ENCODE measurements at regions of chr1 and their contacts with region 1.

Region 1: GRCh38 chr1:156608036-156608674 is 6.9 kb upstream of the GPATCH4 start:
- DNase-seq: peak; percentile 62
- ATAC-seq: peak; percentile 99
- H3K4me3 ChIP-seq: no peak overlapping the region
- H3K27ac ChIP-seq: no peak overlapping the region
- H3K4me1 ChIP-seq: 0 out of 2 replicates have a peak, but pooled peaks cover 4% of the 10 kb centered on the region
- H3K27me3 ChIP-seq: peaks cover 0 to 3% of the 10 kb centered on the region in 2 experiments; a peak in 2 of 4 replicates
- CTCF ChIP-seq: peak; percentile 75 to 93 (median 78)
- EP300 ChIP-seq: no peak
- POLR2A ChIP-seq: no peak
- RAD21 ChIP-seq: peak; percentile 80

Region 2: DNA sequence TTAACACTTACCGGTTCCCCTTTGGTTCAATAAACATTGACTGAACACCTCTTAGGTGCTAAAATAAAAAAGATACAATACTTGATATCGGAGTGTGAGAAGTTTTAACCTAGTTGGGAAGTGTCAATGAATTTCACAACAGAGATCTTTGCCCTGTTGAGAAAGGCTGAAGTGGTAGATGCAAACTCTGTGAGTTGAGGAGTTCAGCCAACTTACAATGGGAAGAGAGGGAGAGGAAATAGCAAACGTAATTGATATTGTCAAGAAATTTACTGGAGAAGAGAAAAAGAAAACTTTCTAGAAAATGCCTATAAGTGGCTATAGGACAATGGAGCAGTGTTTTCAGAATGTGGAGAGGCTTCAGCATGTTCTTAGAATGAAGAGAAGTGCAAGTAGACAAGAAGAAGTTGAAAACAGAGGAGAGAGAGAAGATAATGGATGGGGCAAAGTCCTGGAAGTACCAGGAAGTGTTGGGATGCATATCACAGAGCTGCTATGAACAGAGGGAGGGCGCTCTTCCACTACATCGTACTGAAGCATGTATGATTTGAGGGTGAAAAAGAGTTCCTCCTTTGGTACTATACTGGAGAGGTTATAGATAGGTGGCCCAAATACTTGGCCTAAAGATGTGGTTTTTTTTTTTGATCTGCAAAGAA is 156.5 kb before region 1 on chr1:
- CTCF ChIA-PET with region 1: interaction called, 25 read pairs
- POLR2A ChIA-PET with region 1: interaction called, 4 read pairs
- RAD21 ChIA-PET with region 1: interaction called, 5 read pairs
- SMC1A ChIA-PET with region 1: interaction called, 13 read pairs
- in situ Hi-C with region 1: loop called (anchors 10 kb)
- intact Hi-C with region 1: loop called (anchors 2 kb)
- DNase-seq: no peak
- ATAC-seq: no peak
- H3K4me3 ChIP-seq: no peak overlapping the region
- H3K27ac ChIP-seq: no peak overlapping the region
- H3K4me1 ChIP-seq: peaks cover 6% of the 10 kb centered on the region
- H3K27me3 ChIP-seq: peaks cover 0 to 3% of the 10 kb centered on the region in 2 experiments; a peak in 2 of 4 replicates
- CTCF ChIP-seq: no peak; a peak in 1 of 6 replicates
- EP300 ChIP-seq: no peak
- POLR2A ChIP-seq: no peak
- RAD21 ChIP-seq: no peak

Region 3: DNA sequence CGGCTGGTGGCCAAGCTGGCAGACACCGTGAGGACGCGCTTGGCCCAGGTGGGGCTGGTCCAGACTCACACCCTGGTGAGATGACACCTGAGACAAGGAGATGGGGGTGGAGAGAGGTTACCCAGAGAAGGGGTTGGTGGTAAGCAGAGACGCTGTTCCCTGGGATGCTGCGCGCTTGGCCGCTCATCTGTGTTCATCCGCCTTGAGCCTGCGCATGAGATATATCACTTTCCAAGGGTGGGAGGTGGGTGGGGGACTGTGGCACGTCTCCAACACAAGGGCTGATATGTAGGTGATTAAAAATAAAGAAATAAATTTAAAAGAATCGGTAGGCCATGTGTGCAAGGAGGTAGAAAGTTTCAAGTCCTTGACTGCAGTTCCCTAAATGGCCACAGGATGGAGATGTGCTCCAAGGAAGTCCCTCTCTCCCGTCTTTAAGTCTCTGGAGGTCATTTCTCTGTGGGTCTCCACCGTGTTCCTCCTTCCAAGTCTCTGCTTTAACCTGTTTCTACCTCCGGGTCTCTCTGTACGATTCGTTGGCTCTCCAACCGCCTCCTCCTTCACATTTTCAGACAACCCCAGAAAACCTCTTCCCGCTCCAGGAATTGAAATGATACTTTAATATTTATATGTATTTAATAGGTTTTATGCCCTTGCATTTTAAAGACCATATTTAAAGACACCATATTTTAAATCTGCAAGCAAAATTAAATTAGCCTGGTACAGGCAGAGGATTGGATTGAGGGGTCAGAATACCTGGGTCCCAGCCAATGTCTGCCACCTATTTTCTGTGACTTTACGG is 24.1 kb before region 1 on chr1:
- CTCF ChIA-PET with region 1: interaction called, 40 read pairs
- POLR2A ChIA-PET with region 1: no interaction called
- RAD21 ChIA-PET with region 1: interaction called, 12 read pairs
- SMC1A ChIA-PET with region 1: interaction called, 22 read pairs
- in situ Hi-C with region 1: no loop called
- intact Hi-C with region 1: loop called (anchors 1 kb)
- DNase-seq: no peak
- ATAC-seq: peak; percentile 83
- H3K4me3 ChIP-seq: no peak overlapping the region
- H3K27ac ChIP-seq: no peak overlapping the region
- H3K4me1 ChIP-seq: peaks cover 16% of the 10 kb centered on the region
- H3K27me3 ChIP-seq: no peaks in the 10 kb centered on the region; a peak in 1 of 4 replicates
- CTCF ChIP-seq: peak; percentile 88 to 93 (median 89)
- EP300 ChIP-seq: no peak
- POLR2A ChIP-seq: no peak
- RAD21 ChIP-seq: peak; percentile 87

Region 4: GRCh38 chr1:156591432-156592157 is 16.6 kb before region 1 on chr1 and contains the start of gene NAXE:
- CTCF ChIA-PET with region 1: interaction called, 49 read pairs
- POLR2A ChIA-PET with region 1: interaction called, 6 read pairs
- RAD21 ChIA-PET with region 1: interaction called, 12 read pairs
- SMC1A ChIA-PET with region 1: interaction called, 47 read pairs
- in situ Hi-C with region 1: no loop called
- intact Hi-C with region 1: no loop called
- DNase-seq: no peak
- ATAC-seq: peak; percentile 97
- H3K4me3 ChIP-seq: peak within 1 kb of the TSS; percentile 89
- H3K27ac ChIP-seq: peak within 1 kb of the TSS; percentile 86
- H3K4me1 ChIP-seq: peaks cover 5% of the 10 kb centered on the region
- H3K27me3 ChIP-seq: no peaks in the 10 kb centered on the region
- CTCF ChIP-seq: 0 out of 6 replicates have a peak, but pooled peaks of 1 of the 3 experiments have one; percentile 1
- EP300 ChIP-seq: no peak
- POLR2A ChIP-seq: peak; percentile 91
- RAD21 ChIP-seq: no peak
- polyA plus RNA-seq, gene NAXE: 18.1 to 65.1 TPM

Region 5: GRCh38 chr1:156618853-156619581 is 10.9 kb after region 1 on chr1 and contains the start of gene HAPLN2:
- CTCF ChIA-PET with region 1: interaction called, 23 read pairs
- POLR2A ChIA-PET with region 1: no interaction called
- RAD21 ChIA-PET with region 1: interaction called, 4 read pairs
- SMC1A ChIA-PET with region 1: interaction called, 4 read pairs
- in situ Hi-C with region 1: no loop called
- intact Hi-C with region 1: no loop called
- DNase-seq: no peak
- ATAC-seq: peak; percentile 68
- H3K4me3 ChIP-seq: no peak within 1 kb of the TSS
- H3K27ac ChIP-seq: no peak within 1 kb of the TSS
- H3K4me1 ChIP-seq: no peaks in the 10 kb centered on the region; the same call in 1 of the 2 replicates
- H3K27me3 ChIP-seq: peaks cover 10% of the 10 kb centered on the region in 2 experiments
- CTCF ChIP-seq: peak; percentile 48 to 60 (median 53)
- EP300 ChIP-seq: no peak
- POLR2A ChIP-seq: no peak
- RAD21 ChIP-seq: no peak
- polyA plus RNA-seq, gene HAPLN2: not detected